ENCODE measurements at regions of chr22 and their contacts with region 1.

Region 1: DNA sequence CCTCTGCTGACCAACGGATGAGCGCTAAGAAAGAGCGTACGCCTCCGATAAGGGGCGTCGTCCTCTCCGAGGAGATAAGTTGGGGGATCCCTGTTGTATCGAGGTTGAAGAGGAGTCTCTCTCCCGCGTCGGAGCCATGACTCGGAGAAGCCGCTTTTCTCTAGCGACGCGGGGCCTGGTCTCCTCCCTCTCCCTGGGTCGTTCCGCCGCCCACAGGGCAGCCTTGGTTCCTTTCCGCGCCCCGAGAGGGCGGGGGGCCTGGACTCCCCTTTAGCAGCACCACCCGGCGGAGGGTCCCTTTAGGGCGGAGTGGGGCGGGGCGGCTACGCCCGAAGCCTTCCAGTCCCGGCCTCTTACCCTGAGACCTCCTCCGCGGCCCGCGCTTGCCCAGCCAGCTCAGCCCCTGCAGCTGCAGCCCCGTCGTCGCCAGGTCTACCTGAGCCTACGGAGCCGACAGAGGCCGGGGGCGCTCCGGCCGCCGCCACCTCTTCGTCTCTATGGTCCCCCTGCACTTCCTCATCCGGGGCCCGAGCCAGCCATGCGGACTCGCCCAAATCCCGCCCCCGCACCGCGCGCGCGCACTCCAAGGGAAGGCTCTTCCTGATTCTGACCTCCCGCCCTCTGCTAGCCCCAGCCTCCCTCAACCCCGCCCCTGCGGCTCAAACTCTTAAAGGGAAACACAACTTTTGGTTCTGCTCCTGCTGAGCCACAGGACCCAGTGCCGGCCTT is at the start of gene PRR14L:
- DNase-seq: peak; percentile 96 to 100 (median 99)
- ATAC-seq: peak; percentile 75
- H3K4me3 ChIP-seq: peak within 1 kb of the TSS; percentile 84 to 90
- H3K4me3 Mint-ChIP-seq: peak within 1 kb of the TSS; percentile 98
- H3K27ac ChIP-seq: peak within 1 kb of the TSS; percentile 79 to 84
- H3K27ac Mint-ChIP-seq: peak within 1 kb of the TSS; percentile 97
- H3K4me1 ChIP-seq: peaks cover 40% of the 10 kb centered on the region
- H3K4me1 Mint-ChIP-seq: peaks cover 53% of the 10 kb centered on the region
- H3K27me3 ChIP-seq: no peaks in the 10 kb centered on the region
- H3K27me3 Mint-ChIP-seq: no peaks in the 10 kb centered on the region
- CTCF ChIP-seq: no peak
- total RNA-seq, gene PRR14L: 17.8 to 21.2 TPM

Region 2: GRCh38 chr22:31399211-31400028 is 350.4 kb before region 1 on chr22 and contains the start of gene DRG1:
- CTCF ChIA-PET with region 1: no interaction called
- POLR2A ChIA-PET with region 1: no interaction called
- intact Hi-C with region 1: loop called in 1 of 2 experiments (anchors 1 kb)
- DNase-seq: peak; percentile 91 to 98 (median 97)
- ATAC-seq: peak; percentile 96
- H3K4me3 ChIP-seq: peak within 1 kb of the TSS; percentile 76 to 99
- H3K4me3 Mint-ChIP-seq: peak within 1 kb of the TSS; percentile 95
- H3K27ac ChIP-seq: peak within 1 kb of the TSS; percentile 82 to 87
- H3K27ac Mint-ChIP-seq: peak within 1 kb of the TSS; percentile 96
- H3K4me1 ChIP-seq: peaks cover 13% of the 10 kb centered on the region
- H3K4me1 Mint-ChIP-seq: peaks cover 31% of the 10 kb centered on the region
- H3K27me3 ChIP-seq: no peaks in the 10 kb centered on the region
- H3K27me3 Mint-ChIP-seq: no peaks in the 10 kb centered on the region
- CTCF ChIP-seq: no peak
- total RNA-seq, gene DRG1: 55.9 to 63.3 TPM

Region 3: GRCh38 chr22:31496007-31496734 is 253.6 kb before region 1 on chr22 and contains the start of gene SFI1:
- CTCF ChIA-PET with region 1: no interaction called
- POLR2A ChIA-PET with region 1: no interaction called
- intact Hi-C with region 1: loop called in 1 of 2 experiments (anchors 2 kb)
- DNase-seq: peak; percentile 93 to 98 (median 96)
- ATAC-seq: peak; percentile 83
- H3K4me3 ChIP-seq: peak within 1 kb of the TSS; percentile 83 to 91
- H3K4me3 Mint-ChIP-seq: peak within 1 kb of the TSS; percentile 95
- H3K27ac ChIP-seq: peak within 1 kb of the TSS; percentile 87 to 90
- H3K27ac Mint-ChIP-seq: peak within 1 kb of the TSS; percentile 99
- H3K4me1 ChIP-seq: peaks cover 27% of the 10 kb centered on the region
- H3K4me1 Mint-ChIP-seq: peaks cover 45% of the 10 kb centered on the region
- H3K27me3 ChIP-seq: no peaks in the 10 kb centered on the region
- H3K27me3 Mint-ChIP-seq: no peaks in the 10 kb centered on the region
- CTCF ChIP-seq: no peak
- total RNA-seq, gene SFI1: 217 to 235 TPM

Region 4: GRCh38 chr22:31676700-31677099 is 73.1 kb before region 1 on chr22:
- CTCF ChIA-PET with region 1: no interaction called
- POLR2A ChIA-PET with region 1: interaction called, 8 read pairs
- intact Hi-C with region 1: loop called (anchors 2 kb)
- DNase-seq: peak; percentile 82 to 95 (median 91)
- ATAC-seq: peak; percentile 100
- H3K4me3 ChIP-seq: peak overlapping the region; percentile 61 to 77
- H3K4me3 Mint-ChIP-seq: peak overlapping the region; percentile 90
- H3K27ac ChIP-seq: peak overlapping the region; percentile 80 to 83
- H3K27ac Mint-ChIP-seq: peak overlapping the region; percentile 94
- H3K4me1 ChIP-seq: peaks cover 4% of the 10 kb centered on the region
- H3K4me1 Mint-ChIP-seq: peaks cover 11% of the 10 kb centered on the region
- H3K27me3 ChIP-seq: no peaks in the 10 kb centered on the region
- H3K27me3 Mint-ChIP-seq: no peaks in the 10 kb centered on the region
- CTCF ChIP-seq: no peak

Region 5: GRCh38 chr22:32411829-32412592 is 662.2 kb after region 1 on chr22 and contains the start of gene RTCB:
- CTCF ChIA-PET with region 1: no interaction called
- POLR2A ChIA-PET with region 1: no interaction called
- intact Hi-C with region 1: loop called (anchors 5 to 10 kb)
- DNase-seq: peak; percentile 88 to 96 (median 92)
- ATAC-seq: peak; percentile 88
- H3K4me3 ChIP-seq: peak within 1 kb of the TSS; percentile 82 to 94
- H3K4me3 Mint-ChIP-seq: peak within 1 kb of the TSS; percentile 98
- H3K27ac ChIP-seq: peak within 1 kb of the TSS; percentile 56 to 72
- H3K27ac Mint-ChIP-seq: peak within 1 kb of the TSS; percentile 96
- H3K4me1 ChIP-seq: peaks cover 22% of the 10 kb centered on the region
- H3K4me1 Mint-ChIP-seq: peaks cover 50% of the 10 kb centered on the region
- H3K27me3 ChIP-seq: peaks cover 0 to 2% of the 10 kb centered on the region in 2 experiments
- H3K27me3 Mint-ChIP-seq: peaks cover 3% of the 10 kb centered on the region
- CTCF ChIP-seq: no peak
- total RNA-seq, gene RTCB: 42.8 to 46.5 TPM